Activated B cell treated with CpG ODN at 0.5 μM for 24 hours (primary cell): ENCODE measurements at regions of chr15 and their contacts with region 1.

Region 1: GRCh38 chr15:85361323-85361722 is 19.1 kb upstream of the AKAP13 start:
- DNase-seq: no peak
- ATAC-seq: peak; percentile 23
- H3K4me3 Mint-ChIP-seq: no peak overlapping the region
- H3K27ac Mint-ChIP-seq: no peak overlapping the region
- H3K4me1 Mint-ChIP-seq: peaks cover 29% of the 10 kb centered on the region
- H3K27me3 Mint-ChIP-seq: no peaks in the 10 kb centered on the region
- CTCF ChIP-seq: no peak

Region 2: DNA sequence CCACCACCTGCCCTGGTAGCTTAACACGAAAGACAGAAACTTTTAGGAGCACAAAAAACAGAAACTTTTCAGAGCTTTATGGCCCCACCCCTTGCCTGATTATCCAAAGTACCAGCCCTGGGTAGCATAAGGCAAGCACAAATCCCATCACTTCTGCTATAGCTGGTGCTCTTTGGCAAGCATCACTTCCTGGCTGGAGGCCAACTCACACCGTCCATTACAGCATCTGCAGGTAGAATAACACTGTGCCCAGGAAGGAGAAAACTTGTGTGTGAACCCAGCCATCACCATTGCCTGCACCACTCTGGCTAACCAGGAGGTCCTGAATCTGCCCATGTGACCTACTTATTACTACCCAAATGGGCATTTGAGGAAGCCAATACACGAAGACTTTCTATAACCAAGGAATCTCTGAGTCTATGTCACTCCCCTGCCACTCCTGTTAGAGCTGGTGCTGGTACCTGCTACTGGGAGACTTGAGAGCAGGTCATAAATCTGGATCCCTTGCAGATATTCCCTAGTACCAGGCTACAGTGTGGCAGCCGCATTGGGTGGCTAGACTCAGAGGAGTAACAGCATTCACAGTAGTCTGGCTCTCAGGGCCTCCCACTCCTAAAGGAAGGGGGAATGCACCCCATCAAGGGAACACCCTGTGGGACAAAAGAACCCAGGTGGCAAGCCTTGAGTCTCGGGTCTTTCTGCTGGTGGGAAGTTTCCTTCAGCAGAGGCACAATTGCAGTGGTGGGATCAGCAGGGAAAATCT is 54.2 kb before region 1 on chr15:
- CTCF ChIA-PET with region 1: no interaction called
- POLR2A ChIA-PET with region 1: interaction called, 11 read pairs
- intact Hi-C with region 1: no loop called
- DNase-seq: no peak
- ATAC-seq: no peak
- H3K4me3 Mint-ChIP-seq: no peak overlapping the region
- H3K27ac Mint-ChIP-seq: peak overlapping the region; percentile 61
- H3K4me1 Mint-ChIP-seq: peaks cover 68% of the 10 kb centered on the region
- H3K27me3 Mint-ChIP-seq: no peaks in the 10 kb centered on the region
- CTCF ChIP-seq: no peak

Region 3: DNA sequence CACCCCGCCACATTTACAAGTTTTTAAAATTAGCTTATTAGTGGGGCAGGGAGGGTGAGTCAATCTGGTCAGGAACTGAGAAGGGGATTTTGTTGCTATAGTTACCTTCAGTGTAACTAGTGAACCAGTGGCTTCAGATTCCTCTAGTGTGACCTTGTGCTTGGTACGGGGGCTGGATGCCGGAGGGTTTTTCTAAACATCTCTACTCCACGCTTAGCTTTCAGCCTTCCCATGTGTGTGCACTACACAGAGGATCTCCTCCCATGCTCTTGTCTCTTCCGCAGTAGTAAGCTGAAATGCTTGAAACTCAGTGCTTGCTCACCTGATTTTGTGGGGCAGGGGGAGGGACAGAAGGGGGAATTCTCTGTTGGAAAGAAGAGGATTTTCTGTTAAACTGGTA is 48.8 kb before region 1 on chr15:
- CTCF ChIA-PET with region 1: no interaction called
- POLR2A ChIA-PET with region 1: interaction called, 11 read pairs
- intact Hi-C with region 1: no loop called
- DNase-seq: peak; percentile 53
- ATAC-seq: peak; percentile 89
- H3K4me3 Mint-ChIP-seq: peak overlapping the region; percentile 87
- H3K27ac Mint-ChIP-seq: peak overlapping the region; percentile 99
- H3K4me1 Mint-ChIP-seq: peaks cover 96% of the 10 kb centered on the region
- H3K27me3 Mint-ChIP-seq: no peaks in the 10 kb centered on the region
- CTCF ChIP-seq: no peak

Region 4: DNA sequence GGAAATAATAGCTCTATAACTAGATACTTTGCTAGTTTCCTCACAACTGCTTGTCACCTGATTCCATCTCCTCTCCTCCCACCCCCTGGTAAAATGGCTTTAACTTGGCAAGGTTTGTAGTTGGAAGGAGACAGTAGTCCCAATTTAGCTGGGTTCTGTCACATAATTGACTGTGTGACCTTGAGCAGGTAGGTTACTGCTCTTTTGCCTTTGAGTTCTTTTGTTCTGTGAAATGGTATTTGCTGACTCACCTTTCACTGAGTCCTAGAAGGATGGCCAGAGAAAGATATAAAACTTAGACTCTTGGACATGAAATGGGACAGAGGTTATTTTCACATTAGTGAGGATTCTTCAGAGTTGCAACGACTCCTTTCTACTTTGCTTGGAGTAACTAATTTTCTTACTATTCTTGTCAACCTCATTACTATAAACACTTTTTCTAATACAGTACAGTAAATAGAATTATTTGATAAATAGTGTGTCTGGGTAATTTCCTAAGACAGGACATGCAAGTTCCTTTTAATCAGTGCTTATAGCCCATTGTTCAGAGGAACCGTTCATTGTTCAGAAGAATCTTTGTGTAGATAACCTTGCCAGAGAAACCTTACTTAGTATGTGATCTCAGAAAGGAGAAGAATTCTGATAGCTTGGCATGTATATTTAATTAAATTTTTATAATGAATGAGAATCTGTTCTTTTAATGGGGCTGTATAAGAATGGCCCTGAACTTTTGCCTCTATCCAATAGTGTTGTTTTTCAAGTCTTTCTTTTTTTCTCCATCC is 33.4 kb after region 1 on chr15:
- CTCF ChIA-PET with region 1: no interaction called
- POLR2A ChIA-PET with region 1: no interaction called
- intact Hi-C with region 1: no loop called
- DNase-seq: no peak
- ATAC-seq: no peak
- H3K4me3 Mint-ChIP-seq: no peak overlapping the region
- H3K27ac Mint-ChIP-seq: no peak overlapping the region
- H3K4me1 Mint-ChIP-seq: peaks cover 61% of the 10 kb centered on the region
- H3K27me3 Mint-ChIP-seq: no peaks in the 10 kb centered on the region
- CTCF ChIP-seq: no peak

Region 5: GRCh38 chr15:85618956-85619491 is 257.7 kb after region 1 on chr15:
- CTCF ChIA-PET with region 1: no interaction called
- POLR2A ChIA-PET with region 1: no interaction called
- intact Hi-C with region 1: no loop called
- DNase-seq: no peak
- ATAC-seq: peak; percentile 33
- H3K4me3 Mint-ChIP-seq: no peak overlapping the region
- H3K27ac Mint-ChIP-seq: no peak overlapping the region
- H3K4me1 Mint-ChIP-seq: peaks cover 33% of the 10 kb centered on the region
- H3K27me3 Mint-ChIP-seq: no peaks in the 10 kb centered on the region
- CTCF ChIP-seq: no peak